Panc1 (cell line): ENCODE measurements at regions of chr3 and their contacts with region 1.

Region 1: GRCh38 chr3:183766745-183767606 is 58.4 kb downstream of the MAP6D1 start:
- DNase-seq: peak; percentile 61
- ATAC-seq: peak; percentile 96
- H3K4me3 ChIP-seq: no peak overlapping the region
- H3K27ac ChIP-seq: no peak overlapping the region
- H3K4me1 ChIP-seq: peaks cover 12% of the 10 kb centered on the region
- H3K27me3 ChIP-seq: no peaks in the 10 kb centered on the region
- CTCF ChIP-seq: peak; percentile 94

Region 2: DNA sequence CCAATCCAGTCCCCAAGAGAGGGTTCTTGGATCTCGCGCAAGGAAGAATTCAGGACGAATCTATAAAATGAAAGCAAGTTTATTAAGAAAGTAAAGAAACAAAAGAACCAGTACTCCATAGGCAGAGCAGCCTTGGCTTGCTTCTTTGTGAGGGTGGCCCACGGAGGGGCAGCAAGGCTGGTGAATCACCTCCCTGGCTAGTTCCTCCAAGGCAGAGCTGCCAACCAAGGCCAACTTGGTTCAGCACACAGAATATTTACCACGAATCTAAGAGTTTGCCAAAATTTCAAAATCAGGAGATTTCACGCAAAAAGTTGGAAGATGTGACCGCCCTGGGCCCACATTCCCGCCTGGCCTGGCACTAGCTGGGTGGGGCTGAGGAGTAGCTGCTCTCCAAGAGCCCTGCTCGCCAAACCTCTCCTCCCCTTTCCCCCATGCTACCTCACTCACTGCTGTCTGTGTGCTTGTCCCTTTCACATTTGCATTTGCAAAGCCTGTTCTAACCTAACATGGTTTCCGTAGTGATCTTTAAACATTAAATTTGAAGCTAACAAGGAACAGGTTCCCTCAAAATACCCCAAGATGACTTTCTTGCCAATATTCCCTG is 760.5 kb before region 1 on chr3:
- CTCF ChIA-PET with region 1: no interaction called
- POLR2A ChIA-PET with region 1: no interaction called
- in situ Hi-C with region 1: no loop called
- intact Hi-C with region 1: no loop called
- DNase-seq: no peak
- ATAC-seq: no peak
- H3K4me3 ChIP-seq: no peak overlapping the region
- H3K27ac ChIP-seq: no peak overlapping the region
- H3K4me1 ChIP-seq: no peaks in the 10 kb centered on the region
- H3K27me3 ChIP-seq: no peaks in the 10 kb centered on the region
- CTCF ChIP-seq: no peak

Region 3: DNA sequence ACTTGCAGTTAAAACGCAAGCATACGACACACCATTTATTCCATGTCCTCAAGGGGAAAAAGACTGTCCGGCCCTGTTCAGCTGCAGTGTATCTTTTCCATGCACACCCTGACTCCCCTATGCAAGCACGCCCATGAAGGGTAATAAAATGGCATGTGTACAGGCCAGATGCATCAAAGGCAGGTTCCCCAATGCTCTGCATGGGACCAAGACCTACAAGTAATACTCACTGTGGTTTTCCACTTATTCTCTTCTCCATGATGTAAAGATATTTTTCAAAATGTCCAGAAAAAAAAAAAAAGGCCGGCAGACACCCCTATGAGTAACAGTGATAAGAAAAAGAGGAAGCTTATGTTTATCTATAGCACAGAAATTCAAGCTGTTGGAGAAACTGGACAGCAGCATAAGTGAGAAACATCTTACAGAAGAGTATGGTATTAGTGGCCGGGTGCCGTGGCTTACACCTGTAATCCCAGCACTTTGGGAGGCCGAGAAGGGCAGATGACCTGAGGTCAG is 409.4 kb before region 1 on chr3:
- CTCF ChIA-PET with region 1: no interaction called
- POLR2A ChIA-PET with region 1: no interaction called
- in situ Hi-C with region 1: no loop called
- intact Hi-C with region 1: no loop called
- DNase-seq: no peak
- ATAC-seq: no peak
- H3K4me3 ChIP-seq: no peak overlapping the region
- H3K27ac ChIP-seq: no peak overlapping the region
- H3K4me1 ChIP-seq: no peaks in the 10 kb centered on the region
- H3K27me3 ChIP-seq: no peaks in the 10 kb centered on the region
- CTCF ChIP-seq: no peak

Region 4: GRCh38 chr3:183468424-183468823 is 298.6 kb before region 1 on chr3:
- CTCF ChIA-PET with region 1: interaction called, 10 read pairs
- POLR2A ChIA-PET with region 1: no interaction called
- in situ Hi-C with region 1: no loop called
- intact Hi-C with region 1: loop called (anchors 1 kb)
- DNase-seq: no peak
- ATAC-seq: no peak
- H3K4me3 ChIP-seq: no peak overlapping the region
- H3K27ac ChIP-seq: no peak overlapping the region
- H3K4me1 ChIP-seq: peaks cover 4% of the 10 kb centered on the region; the same call in 1 of the 2 replicates
- H3K27me3 ChIP-seq: no peaks in the 10 kb centered on the region
- CTCF ChIP-seq: no peak

Region 5: DNA sequence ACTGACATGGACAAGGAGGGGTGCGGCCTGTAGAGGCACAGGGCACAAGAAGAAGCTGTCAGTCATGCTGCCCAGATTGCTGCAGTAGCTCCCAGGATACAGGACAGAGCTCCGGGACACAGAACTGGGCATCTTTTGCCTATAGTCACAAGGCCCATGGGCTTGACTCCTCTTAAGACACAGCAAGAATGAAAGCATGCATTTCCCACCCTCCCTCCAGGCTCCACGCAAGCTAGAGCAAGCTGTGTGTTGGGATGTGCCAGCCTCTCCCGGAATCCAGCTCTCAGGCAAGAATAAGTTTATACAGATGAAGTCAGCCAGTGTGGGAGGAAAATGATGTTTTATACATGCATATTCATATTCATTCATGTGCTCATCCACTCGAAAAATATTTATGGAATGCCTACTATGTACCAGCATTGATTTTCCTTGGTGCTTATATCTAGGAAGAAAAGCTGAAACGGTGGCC is 274.3 kb before region 1 on chr3:
- CTCF ChIA-PET with region 1: interaction called, 12 read pairs
- POLR2A ChIA-PET with region 1: no interaction called
- in situ Hi-C with region 1: no loop called
- intact Hi-C with region 1: no loop called
- DNase-seq: no peak
- ATAC-seq: peak; percentile 22; the same call in 1 of the 2 replicates
- H3K4me3 ChIP-seq: no peak overlapping the region
- H3K27ac ChIP-seq: no peak overlapping the region
- H3K4me1 ChIP-seq: no peaks in the 10 kb centered on the region
- H3K27me3 ChIP-seq: peaks cover 3% of the 10 kb centered on the region; the same call in 1 of the 2 replicates
- CTCF ChIP-seq: no peak

Region 6: DNA sequence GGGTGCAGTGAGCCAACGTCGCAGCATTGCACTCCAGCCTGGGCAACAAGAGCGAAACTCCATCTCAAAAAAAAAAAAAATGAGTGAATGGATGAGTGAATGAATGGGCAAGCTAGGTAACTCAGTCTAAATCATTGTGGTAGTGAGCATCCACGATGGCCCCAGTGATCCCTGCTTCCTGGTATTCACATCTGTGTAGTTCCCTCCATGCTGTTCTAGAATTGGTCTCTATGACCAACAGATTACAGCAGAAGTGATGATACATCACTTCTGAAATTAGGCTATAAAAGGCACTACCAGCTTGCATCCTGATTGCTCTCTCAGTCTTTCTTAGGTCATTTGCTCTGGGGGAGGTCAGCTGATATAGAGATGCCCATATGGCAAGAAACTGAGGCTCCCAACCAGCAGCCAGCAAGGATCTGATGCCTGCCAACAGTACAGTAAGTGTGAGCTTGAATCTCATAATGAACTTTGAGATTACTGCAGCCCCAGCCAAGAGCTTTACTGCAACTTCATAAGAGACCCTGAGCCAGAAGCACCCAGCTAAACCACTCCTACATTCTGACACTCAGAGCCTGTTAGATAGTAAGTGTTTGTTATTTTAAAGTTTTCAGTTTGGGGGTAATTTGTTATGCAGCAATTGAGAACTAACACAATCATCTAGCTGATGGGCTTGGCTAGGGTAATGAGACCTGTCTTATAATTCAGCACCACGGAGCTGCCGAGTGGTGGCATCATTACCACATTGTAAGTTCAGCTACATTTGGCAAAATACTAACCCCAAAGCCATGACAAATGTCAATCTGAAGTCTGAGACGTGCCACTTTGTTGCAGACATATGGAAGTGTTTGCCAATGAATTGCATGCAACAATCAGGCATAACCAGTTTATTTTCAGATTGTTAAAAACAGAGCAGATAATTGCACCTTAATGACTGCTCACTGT is 264.5 kb before region 1 on chr3:
- CTCF ChIA-PET with region 1: interaction called, 6 read pairs
- POLR2A ChIA-PET with region 1: no interaction called
- in situ Hi-C with region 1: no loop called
- intact Hi-C with region 1: loop called (anchors 5 kb)
- DNase-seq: no peak
- ATAC-seq: peak; percentile 78
- H3K4me3 ChIP-seq: no peak overlapping the region
- H3K27ac ChIP-seq: no peak overlapping the region
- H3K4me1 ChIP-seq: no peaks in the 10 kb centered on the region
- H3K27me3 ChIP-seq: no peaks in the 10 kb centered on the region
- CTCF ChIP-seq: peak; percentile 75

Region 7: DNA sequence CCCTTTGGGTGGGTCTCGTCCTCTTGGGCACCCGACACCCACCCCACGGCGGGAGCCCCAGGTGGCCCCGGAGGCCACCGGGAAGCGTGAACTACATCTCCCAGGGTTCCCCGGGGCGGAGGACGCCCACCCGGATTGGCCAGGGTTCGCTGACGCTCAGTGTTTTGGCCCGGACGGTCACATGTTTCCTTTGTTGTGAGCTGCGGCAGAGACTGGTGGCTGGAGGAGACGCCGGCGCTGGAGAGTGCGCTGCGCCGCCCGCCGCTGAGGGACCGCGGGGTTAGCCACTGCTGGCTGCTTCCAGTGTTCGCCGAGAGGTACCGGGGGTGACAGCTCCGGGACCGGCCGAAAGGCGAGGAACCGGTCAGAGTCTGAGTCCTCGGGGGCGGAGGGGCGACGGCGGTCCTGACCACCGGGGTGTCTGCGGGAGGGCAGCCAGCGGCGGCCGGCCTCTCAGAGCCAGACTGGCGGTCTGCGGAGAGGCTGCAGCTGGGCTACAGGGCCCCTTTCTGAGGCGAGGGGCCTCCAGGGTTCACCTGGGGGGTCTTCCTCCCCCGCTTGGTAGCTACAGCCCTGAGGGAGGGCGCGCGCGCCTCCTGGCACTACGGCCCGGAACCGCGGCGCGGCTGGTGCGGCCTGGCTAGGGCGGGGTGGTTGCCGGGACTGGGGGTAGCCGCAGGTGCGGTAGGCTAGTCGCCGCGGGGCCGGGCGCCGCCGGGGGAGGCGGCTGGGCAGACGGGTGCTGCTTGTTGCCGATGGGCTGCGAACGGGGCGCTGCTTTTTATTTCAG is 131.3 kb before region 1 on chr3 and contains the start of gene KLHL24:
- CTCF ChIA-PET with region 1: no interaction called
- POLR2A ChIA-PET with region 1: no interaction called
- in situ Hi-C with region 1: no loop called
- intact Hi-C with region 1: loop called (anchors 5 kb)
- DNase-seq: peak; percentile 75
- ATAC-seq: peak; percentile 92
- H3K4me3 ChIP-seq: peak within 1 kb of the TSS; percentile 74 to 87
- H3K27ac ChIP-seq: peak within 1 kb of the TSS; percentile 82
- H3K4me1 ChIP-seq: peaks cover 16% of the 10 kb centered on the region
- H3K27me3 ChIP-seq: no peaks in the 10 kb centered on the region
- CTCF ChIP-seq: no peak
- total RNA-seq, gene KLHL24: 42.0 TPM

Region 8: DNA sequence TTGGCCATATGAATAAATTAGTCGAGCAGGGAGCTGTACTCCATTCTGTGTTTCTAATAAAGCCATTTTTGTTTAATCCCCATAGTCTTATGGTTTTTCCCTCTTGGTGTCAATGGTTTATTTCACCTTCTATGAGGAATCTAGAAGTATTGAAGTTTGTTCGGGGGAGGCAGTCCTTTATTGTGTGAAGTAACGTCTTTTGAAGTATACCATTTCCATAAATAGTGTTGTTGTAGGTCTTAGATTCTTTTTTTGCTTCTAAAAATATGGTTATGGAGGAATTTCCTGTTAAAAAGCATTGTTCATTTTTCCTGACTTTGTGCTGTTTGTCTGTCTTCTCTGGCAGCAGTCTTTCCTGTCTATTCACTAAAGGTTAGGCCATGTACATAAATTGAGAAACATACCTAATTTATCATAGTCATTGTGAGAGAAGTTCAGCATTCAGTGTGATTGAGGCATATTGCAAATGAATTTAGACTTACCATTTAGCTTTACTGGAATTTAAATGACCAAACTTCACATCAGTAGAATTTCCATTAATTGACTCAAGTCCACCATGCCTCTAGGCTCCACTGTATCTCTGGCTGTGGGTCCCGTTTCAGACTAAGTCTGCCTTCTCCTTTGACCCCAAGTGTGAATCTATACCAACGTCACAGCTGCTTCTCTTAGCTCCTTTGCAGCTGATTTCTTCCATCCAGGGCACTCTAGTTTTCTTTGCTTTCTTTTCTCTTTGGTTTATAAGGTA is 32.1 kb before region 1 on chr3:
- CTCF ChIA-PET with region 1: no interaction called
- POLR2A ChIA-PET with region 1: no interaction called
- in situ Hi-C with region 1: no loop called
- intact Hi-C with region 1: no loop called
- DNase-seq: no peak
- ATAC-seq: no peak
- H3K4me3 ChIP-seq: no peak overlapping the region
- H3K27ac ChIP-seq: no peak overlapping the region
- H3K4me1 ChIP-seq: no peaks in the 10 kb centered on the region
- H3K27me3 ChIP-seq: no peaks in the 10 kb centered on the region
- CTCF ChIP-seq: no peak